Posterior vena cava (tissue), 2 donors: ENCODE measurements at regions of chr20 and their contacts with region 1.

Region 1: GRCh38 chr20:59782986-59783640 is 150.3 kb downstream of the SYCP2 start:
- DNase-seq: no peak

Region 2: DNA sequence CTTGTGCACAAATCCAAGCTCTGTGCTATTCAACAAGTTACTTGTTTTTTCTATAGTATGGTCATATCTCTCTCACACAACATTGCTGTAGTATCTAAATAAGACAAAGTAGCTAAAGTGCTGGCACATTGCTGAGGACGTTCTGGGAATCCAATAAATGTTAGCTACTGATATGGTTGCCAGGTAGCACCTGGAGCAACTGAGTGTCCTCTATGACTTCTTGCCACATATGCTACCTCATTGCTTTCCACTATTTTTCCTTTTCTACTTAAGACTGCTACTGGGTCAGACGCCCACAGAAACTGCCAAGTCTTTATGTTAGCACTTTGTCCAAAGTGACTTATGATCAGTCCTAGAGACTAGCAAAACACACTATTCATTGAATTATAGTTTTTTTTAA is 65.1 kb after region 1 on chr20:
- intact Hi-C with region 1: loop called (anchors 2 to 5 kb)
- DNase-seq: no peak

Region 3: DNA sequence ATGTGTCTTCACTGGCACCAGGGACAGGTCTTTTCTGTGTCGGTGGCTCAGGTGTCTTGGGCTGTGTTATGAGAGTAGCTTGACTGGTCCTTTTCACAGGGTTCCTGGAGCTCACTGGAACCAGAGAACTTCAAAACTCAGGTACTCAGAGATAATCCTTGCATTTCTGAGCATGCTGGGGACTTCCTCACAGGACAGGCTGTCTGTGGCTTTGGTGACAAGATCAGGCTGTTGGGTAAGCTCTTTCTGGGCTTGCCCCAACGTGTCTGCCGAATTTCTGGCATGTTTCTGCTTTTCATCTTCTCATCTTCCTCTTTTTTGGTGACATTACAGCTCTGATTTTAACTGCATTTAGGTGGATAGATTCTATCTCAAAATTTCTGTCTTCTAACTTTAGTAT is 445.1 kb after region 1 on chr20:
- intact Hi-C with region 1: no loop called
- DNase-seq: no peak